A673 (cell line): ENCODE measurements at regions of chr6 and their contacts with region 1.

Region 1: GRCh38 chr6:84428300-84428907 is 201.0 kb upstream of the CEP162 start:
- DNase-seq: peak; percentile 62
- H3K4me3 ChIP-seq: no peak overlapping the region
- H3K27ac ChIP-seq: no peak overlapping the region
- H3K4me1 ChIP-seq: no peaks in the 10 kb centered on the region
- H3K27me3 ChIP-seq: peaks cover 10% of the 10 kb centered on the region
- CTCF ChIP-seq: peak; percentile 87

Region 2: DNA sequence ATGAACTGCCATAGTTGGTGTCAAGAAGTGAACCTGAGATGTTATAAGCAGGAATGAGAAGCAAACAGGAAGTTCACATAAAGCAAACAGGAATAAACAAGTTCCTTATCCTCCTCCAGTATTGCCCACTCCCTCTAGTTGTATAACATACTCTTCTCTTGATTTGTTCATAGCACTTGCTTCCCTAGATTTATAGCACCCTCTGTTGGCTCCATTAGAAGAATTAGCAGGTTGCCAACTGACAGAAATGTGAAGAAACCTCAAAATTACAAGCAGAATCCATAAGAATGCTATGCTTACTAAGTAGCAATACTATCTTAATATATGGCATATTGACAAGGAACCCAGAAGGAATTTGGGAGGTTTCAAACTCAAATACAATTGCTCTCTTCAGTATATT is 140.6 kb after region 1 on chr6:
- CTCF ChIA-PET with region 1: no interaction called
- POLR2A ChIA-PET with region 1: no interaction called
- intact Hi-C with region 1: loop called (anchors 2 kb)
- DNase-seq: peak; percentile 48
- H3K4me3 ChIP-seq: no peak overlapping the region
- H3K27ac ChIP-seq: no peak overlapping the region
- H3K4me1 ChIP-seq: no peaks in the 10 kb centered on the region
- H3K27me3 ChIP-seq: no peaks in the 10 kb centered on the region
- CTCF ChIP-seq: peak; percentile 56

Region 3: DNA sequence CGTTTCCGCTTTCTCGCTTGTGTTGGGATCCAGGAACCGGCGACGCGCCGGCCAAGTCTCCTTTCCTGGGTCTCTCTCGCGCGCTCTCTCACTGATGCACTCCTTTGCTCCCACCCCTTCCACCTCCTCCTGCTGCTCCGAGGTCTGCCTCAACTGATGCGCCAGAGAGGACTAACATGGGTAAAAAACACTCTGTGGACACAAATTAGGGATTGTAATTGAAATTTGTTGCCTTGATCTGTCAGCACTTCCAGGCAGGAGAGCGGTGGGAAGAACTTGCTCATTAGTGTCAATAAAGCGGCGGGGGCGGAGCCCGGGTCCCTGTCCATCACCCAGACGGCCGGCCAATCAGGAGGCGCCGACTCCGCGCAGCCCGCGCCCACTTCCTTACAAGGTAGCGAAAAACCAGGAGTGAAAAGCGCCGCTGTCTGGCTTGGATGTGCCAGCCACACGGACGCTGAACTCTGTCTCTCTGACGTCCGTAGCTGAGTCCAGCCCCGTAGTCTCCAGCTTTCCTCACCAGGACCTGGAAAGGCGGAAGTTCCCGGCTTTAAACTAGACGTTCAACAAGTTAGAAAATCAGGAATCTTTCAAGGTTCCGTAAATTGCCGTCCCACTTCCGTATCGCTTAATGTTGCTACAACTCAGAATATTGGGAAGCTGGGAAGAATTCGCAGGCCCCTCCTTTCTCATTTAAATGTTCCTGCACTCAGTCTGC is 336.1 kb after region 1 on chr6 and contains the start of gene TBX18:
- CTCF ChIA-PET with region 1: no interaction called
- POLR2A ChIA-PET with region 1: no interaction called
- intact Hi-C with region 1: loop called (anchors 5 kb)
- DNase-seq: peak; percentile 95
- H3K4me3 ChIP-seq: peak within 1 kb of the TSS; percentile 72
- H3K27ac ChIP-seq: peak within 1 kb of the TSS; percentile 89
- H3K4me1 ChIP-seq: peaks cover 17% of the 10 kb centered on the region
- H3K27me3 ChIP-seq: peaks cover 71% of the 10 kb centered on the region
- CTCF ChIP-seq: 0 out of 2 replicates have a peak, but pooled peaks have one; percentile 27
- total RNA-seq, gene TBX18: 14.6 and 16.0 TPM in 2 replicates